KBM-7 (cell line): ENCODE measurements at regions of chr17 and their contacts with region 1.

Region 1: GRCh38 chr17:71023249-71024030 is 854.1 kb downstream of the KCNJ2 start:
- DNase-seq: no peak

Region 2: DNA sequence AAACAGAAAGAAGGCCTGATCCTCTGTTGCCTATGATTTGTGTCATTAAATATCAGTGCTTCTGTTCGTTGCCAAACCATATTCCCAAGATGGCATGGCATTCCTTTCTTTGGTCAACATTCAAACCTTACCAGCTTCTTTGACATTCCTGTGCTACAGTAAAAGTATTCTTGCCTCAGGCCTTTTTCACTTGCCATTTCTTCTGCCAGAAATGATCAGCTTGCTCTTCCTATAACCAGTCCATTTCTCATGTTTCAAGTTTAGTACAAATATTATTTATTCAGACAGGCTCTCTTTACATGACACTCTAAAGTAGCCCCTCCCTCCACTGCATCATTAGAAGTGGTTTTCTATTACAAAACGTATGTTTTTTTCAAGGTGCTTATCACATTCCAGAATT is 575.9 kb before region 1 on chr17:
- in situ Hi-C with region 1: no loop called
- DNase-seq: no peak

Region 3: DNA sequence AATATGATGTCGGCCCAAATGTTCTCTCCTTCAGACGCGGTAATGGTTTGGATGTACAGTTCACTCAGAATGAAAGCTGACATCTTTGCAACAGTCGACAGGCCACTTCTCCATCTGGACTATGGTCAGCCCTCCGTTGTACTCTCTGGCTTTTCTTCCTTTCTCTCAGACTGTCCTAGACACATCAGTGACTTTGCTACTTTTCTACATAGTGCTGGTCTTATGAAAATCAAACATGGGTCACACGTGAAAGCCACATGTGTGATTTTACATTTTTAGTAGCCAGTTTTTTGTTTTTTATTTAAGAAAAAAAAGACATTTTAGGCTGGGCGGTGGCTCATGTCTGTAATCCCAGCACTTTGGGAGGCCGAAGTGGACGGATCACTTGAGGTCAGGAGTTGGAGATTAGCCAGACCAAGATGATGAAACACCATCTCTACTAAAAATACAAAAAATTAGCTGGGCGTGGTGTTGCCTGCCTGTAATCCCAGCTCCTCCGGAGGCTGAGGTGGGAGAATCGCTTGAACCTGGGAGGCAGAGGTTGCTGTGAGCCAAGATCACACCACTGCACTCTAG is 210.0 kb before region 1 on chr17:
- in situ Hi-C with region 1: no loop called
- DNase-seq: no peak

Region 4: DNA sequence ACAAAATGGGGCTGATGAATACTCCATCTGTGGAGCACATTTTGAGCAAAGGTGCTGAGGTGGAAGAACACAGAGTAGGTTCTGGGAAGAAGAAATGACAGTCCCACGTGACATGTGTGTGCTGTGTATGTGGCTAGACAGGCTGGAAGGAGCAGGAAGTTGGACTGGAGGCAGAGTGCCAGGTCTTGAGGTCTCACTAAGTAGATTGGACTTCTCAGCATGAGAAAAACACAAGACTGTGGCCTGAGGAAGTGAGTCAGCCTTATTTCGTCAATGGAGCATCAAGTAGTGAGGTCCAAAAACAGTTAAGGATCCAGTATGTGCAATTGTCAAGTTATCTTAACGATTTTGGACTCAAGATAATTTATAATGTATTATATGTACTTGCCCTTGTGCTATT is 117.6 kb before region 1 on chr17:
- in situ Hi-C with region 1: loop called (anchors 25 kb)
- DNase-seq: peak; percentile 3

Region 5: GRCh38 chr17:71726341-71726740 is 702.9 kb after region 1 on chr17:
- in situ Hi-C with region 1: no loop called
- DNase-seq: no peak